MCF 10A (cell line): ENCODE measurements at regions of chr2 and their contacts with region 1.

Region 1: DNA sequence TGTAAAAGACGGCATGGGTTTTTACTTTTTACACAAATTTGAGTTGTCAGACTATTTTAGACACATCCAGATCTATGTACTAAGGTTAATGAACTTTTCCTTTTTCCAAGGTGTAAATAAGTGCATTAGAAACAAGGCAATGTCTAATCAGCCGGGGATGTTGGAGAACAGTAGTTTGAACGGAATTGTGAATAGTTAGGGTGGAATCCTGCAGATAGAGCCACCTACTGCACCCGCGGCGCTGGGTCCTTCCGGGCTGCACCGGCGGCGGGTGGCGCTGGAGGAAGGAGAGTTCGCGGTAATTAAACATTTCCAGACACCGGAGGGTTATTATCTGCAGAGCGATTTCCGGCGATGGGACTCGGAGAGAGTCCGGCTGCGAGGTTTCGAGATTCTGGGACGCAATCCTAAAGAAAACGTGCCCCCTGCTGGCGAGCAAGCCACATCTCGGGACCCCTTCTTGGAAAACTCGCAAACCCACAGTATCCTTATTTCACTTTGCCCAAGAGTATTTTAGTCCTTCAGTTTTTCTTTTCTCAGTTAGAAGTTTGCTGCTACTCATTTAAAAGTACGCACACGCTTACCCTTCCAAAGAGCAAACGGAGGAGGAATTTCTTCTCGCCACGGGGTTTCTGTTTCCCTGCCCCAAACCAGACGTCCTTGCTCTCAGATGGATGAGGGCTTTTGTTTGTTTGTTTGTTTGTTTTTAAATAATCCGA is 4.5 kb upstream of the OSR1 start:
- DNase-seq: peak; percentile 88
- H3K4me3 Mint-ChIP-seq: peak overlapping the region; percentile 87
- H3K27ac Mint-ChIP-seq: no peak overlapping the region
- H3K4me1 Mint-ChIP-seq: peaks cover 6% of the 10 kb centered on the region
- H3K27me3 Mint-ChIP-seq: no peaks in the 10 kb centered on the region
- CTCF ChIP-seq: peak; percentile 70

Region 2: DNA sequence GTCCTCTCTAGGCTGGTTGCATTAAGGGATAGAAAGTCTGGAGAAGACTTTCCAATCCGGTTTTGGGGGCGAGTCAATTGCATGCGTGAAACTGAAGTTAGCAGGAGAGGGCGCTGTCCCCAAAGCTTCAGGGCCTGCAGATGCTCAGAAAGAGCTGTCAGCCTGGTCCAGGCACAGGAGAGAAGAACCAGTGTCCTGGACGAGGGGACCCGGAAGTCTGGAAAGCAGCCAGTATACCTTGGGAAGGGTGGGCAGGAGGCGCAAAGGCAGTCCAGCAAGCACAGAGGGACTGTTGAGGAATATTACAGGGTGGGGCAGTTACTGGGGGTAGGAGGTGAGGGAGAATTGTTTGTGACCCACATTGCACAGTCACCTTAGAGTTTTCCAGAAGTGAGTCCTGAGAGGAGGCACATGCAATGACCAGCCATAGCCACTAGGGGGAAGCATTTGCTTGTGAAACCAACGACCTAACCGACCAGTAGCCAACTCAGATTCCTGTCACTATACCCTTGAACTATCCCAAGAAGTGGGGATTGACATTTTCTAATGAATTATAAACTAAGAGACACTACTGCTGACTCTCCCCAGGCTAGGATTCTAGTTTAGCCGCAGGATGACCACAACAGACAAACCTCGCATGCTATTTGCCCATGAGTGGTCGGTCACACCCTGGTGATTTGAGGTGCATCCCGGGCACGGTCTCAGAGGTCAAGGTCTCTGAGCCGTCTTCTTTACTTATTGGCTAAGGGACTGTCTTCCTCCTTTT is 975.3 kb before region 1 on chr2:
- CTCF ChIA-PET with region 1: interaction called, 5 read pairs
- POLR2A ChIA-PET with region 1: no interaction called
- intact Hi-C with region 1: loop called (anchors 1 kb)
- DNase-seq: peak; percentile 75
- H3K4me3 Mint-ChIP-seq: no peak overlapping the region
- H3K27ac Mint-ChIP-seq: no peak overlapping the region
- H3K4me1 Mint-ChIP-seq: peaks cover 6% of the 10 kb centered on the region
- H3K27me3 Mint-ChIP-seq: peaks cover 4% of the 10 kb centered on the region
- CTCF ChIP-seq: peak; percentile 95

Region 3: GRCh38 chr2:18749912-18750526 is 612.9 kb before region 1 on chr2:
- CTCF ChIA-PET with region 1: interaction called, 26 read pairs
- POLR2A ChIA-PET with region 1: interaction called, 4 read pairs
- intact Hi-C with region 1: loop called (anchors 1 kb)
- DNase-seq: peak; percentile 76
- H3K4me3 Mint-ChIP-seq: no peak overlapping the region
- H3K27ac Mint-ChIP-seq: no peak overlapping the region
- H3K4me1 Mint-ChIP-seq: peaks cover 9% of the 10 kb centered on the region
- H3K27me3 Mint-ChIP-seq: no peaks in the 10 kb centered on the region
- CTCF ChIP-seq: peak; percentile 63

Region 4: GRCh38 chr2:18883616-18884456 is 479.1 kb before region 1 on chr2:
- CTCF ChIA-PET with region 1: interaction called, 3 read pairs
- POLR2A ChIA-PET with region 1: no interaction called
- intact Hi-C with region 1: loop called (anchors 1 kb)
- DNase-seq: peak; percentile 46
- H3K4me3 Mint-ChIP-seq: no peak overlapping the region
- H3K27ac Mint-ChIP-seq: no peak overlapping the region
- H3K4me1 Mint-ChIP-seq: peaks cover 7% of the 10 kb centered on the region
- H3K27me3 Mint-ChIP-seq: no peaks in the 10 kb centered on the region
- CTCF ChIP-seq: peak; percentile 55

Region 5: GRCh38 chr2:19158208-19158607 is 204.7 kb before region 1 on chr2:
- CTCF ChIA-PET with region 1: no interaction called
- POLR2A ChIA-PET with region 1: no interaction called
- intact Hi-C with region 1: no loop called
- DNase-seq: no peak
- H3K4me3 Mint-ChIP-seq: no peak overlapping the region
- H3K27ac Mint-ChIP-seq: no peak overlapping the region
- H3K4me1 Mint-ChIP-seq: no peaks in the 10 kb centered on the region
- H3K27me3 Mint-ChIP-seq: no peaks in the 10 kb centered on the region
- CTCF ChIP-seq: no peak

Region 6: DNA sequence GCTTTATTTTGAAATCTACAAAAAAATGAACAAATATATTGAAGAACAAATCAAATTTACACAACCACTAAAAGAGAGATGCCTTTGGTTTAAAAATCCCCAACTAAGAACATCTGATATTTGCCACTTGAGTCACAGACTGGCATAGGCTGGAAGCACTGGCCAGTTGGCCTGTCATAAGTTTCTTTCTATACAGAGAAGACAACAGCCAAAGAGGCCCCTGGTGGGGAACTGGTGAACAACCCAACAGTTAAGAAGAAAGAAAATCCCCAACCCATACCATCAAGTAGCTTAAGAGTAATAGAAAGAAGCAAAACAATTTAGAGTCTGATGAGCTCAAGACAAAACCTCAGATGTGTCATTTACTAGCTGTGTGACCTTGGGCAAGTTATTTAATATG is 50.0 kb before region 1 on chr2:
- CTCF ChIA-PET with region 1: no interaction called
- POLR2A ChIA-PET with region 1: no interaction called
- intact Hi-C with region 1: loop called (anchors 1 kb)
- DNase-seq: peak; percentile 49
- H3K4me3 Mint-ChIP-seq: no peak overlapping the region
- H3K27ac Mint-ChIP-seq: no peak overlapping the region
- H3K4me1 Mint-ChIP-seq: no peaks in the 10 kb centered on the region
- H3K27me3 Mint-ChIP-seq: no peaks in the 10 kb centered on the region
- CTCF ChIP-seq: peak; percentile 11

Region 7: DNA sequence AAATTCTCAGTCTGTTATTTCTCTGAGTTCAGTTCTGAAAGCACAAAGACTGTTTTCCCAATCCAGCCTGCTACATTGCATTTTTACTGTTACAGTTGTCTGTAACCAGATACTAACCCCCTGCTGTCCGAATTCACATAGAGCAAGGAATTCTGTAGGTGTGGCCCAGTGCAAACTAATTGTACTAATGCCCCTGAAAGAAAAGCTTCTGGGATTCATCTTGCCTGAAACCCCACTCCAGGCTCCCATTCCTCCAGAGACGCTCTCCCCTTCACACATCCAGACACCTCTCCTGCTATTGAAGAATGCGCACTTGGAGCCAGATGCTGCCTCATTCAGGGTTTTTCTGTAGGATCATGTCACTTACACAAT is 411.9 kb after region 1 on chr2:
- CTCF ChIA-PET with region 1: no interaction called
- POLR2A ChIA-PET with region 1: no interaction called
- intact Hi-C with region 1: no loop called
- DNase-seq: no peak
- H3K4me3 Mint-ChIP-seq: no peak overlapping the region
- H3K27ac Mint-ChIP-seq: no peak overlapping the region
- H3K4me1 Mint-ChIP-seq: peaks cover 9% of the 10 kb centered on the region
- H3K27me3 Mint-ChIP-seq: peaks cover 17% of the 10 kb centered on the region
- CTCF ChIP-seq: no peak